Thyroid gland (tissue), 4 donors: ENCODE measurements at regions of chr4 and their contacts with region 1.

Region 1: DNA sequence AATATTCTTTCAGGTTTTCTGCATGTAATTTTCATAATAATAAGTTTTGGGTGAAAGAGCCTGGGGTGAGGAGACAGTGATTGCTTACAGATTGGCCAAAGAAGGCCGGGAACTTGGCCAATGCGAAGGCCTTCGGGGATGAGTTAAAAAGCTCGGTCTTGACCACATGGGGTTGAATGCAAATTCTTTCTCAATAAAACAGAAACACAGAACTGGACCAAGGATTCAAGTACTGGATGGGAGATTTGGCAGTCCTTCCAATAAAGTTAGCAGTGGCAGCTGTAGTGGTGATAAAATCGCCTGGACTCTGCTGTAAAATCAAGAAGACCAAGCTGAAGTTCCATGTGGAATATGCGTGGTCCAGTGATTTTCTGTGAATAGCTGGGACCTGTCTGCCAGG is 282.2 kb upstream of the KLF3 start:
- DNase-seq: no peak
- H3K4me3 ChIP-seq: no peak overlapping the region
- H3K27ac ChIP-seq: no peak overlapping the region
- H3K4me1 ChIP-seq: peaks cover 21 to 32% of the 10 kb centered on the region in 2 donors
- H3K27me3 ChIP-seq: no peaks in the 10 kb centered on the region
- CTCF ChIP-seq: no peak
- POLR2A ChIP-seq: no peak

Region 2: GRCh38 chr4:38356686-38357085 is 25.1 kb before region 1 on chr4:
- intact Hi-C with region 1: loop called (anchors 2 kb)
- DNase-seq: no peak
- H3K4me3 ChIP-seq: no peak overlapping the region
- H3K27ac ChIP-seq: no peak overlapping the region
- H3K4me1 ChIP-seq: no peaks in the 10 kb centered on the region
- H3K27me3 ChIP-seq: no peaks in the 10 kb centered on the region
- CTCF ChIP-seq: no peak
- POLR2A ChIP-seq: no peak